AG04450 (cell line): ENCODE measurements at regions of chr1 and their contacts with region 1.

Region 1: GRCh38 chr1:209989525-209989924 is 51.5 kb downstream of the SYT14 start:
- DNase-seq: no peak
- H3K4me3 ChIP-seq: no peak overlapping the region
- H3K27ac ChIP-seq: no peak overlapping the region
- H3K27me3 ChIP-seq: no peaks in the 10 kb centered on the region
- CTCF ChIP-seq: peak; percentile 27; the same call in 1 of the 2 replicates

Region 2: DNA sequence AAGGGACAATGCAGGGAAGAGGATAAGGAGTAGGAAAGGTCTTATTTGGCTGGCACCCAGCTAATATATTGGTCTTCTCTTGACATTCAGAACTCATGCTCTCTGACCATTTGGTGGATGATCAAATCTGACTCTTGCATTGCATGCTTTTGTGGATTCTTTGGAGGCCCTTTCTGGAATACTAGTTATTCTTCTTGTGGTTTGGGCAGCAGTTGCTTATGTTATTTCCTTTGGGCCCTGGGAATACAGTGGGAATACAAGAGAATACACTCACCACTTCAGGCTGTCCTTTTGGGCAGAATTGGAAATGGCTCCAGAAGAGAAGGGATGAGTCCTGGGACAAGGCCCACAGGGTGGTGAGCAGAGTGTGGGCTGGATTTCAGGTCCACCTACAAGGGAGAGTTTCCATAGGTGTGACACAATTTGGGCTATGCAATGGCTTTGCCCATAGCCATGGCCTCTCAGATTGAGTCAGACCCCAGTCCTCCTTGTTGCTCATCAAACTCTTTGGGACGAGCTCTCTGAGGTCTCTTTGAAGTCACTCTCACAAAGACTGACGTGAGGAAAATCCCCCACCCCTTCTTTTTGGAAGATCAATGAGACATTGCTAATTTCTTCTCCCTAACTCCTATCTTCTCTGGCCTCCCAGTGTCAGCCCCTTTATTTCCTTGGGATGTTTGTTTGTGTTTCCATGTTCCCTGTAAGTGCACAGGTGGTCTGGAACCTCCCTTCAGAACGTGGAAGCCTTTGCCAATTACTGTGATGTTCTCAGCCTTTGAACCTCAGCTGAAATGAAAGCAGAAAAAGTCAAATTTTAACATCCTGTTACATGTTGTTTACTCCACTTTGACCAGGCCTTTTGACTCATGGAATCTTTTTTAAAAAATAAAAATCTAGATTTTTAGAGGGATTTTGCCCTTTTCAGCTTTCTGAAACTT is 265.5 kb before region 1 on chr1:
- CTCF ChIA-PET with region 1: no interaction called
- POLR2A ChIA-PET with region 1: no interaction called
- DNase-seq: no peak
- H3K4me3 ChIP-seq: no peak overlapping the region
- H3K27ac ChIP-seq: no peak overlapping the region
- H3K27me3 ChIP-seq: no peaks in the 10 kb centered on the region
- CTCF ChIP-seq: no peak

Region 3: DNA sequence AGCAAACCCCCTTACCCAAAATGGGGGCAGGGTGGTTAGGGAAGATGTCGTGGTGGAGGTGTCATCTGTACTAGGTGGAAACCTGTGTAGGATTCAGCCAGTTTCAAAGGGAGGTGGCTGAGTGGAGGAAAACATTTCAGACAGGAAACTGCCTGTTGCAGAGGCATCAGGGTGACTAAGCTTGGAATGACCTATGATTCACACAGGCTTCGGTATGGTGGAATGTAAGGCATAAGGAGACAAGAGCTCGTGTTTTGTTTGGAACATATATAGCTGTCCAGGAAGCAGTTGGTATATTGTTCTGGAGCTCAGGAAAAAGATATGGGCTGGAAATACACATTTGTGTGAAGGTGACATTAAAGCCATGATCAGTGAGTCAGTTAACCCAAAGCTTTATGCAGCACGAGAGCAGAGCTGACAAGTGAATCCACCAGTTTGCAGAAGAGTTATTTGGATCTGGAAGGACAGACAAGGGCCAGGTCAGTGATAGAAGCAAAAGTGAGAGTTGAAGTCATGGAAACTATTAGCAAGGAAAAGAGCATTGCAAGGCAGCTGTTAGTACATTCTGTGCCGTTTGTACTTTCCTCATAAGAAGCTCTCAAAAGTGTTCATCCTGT is 149.5 kb before region 1 on chr1:
- CTCF ChIA-PET with region 1: interaction called, 29 read pairs
- POLR2A ChIA-PET with region 1: no interaction called
- DNase-seq: peak; percentile 88
- H3K4me3 ChIP-seq: peak overlapping the region; percentile 22
- H3K27ac ChIP-seq: peak overlapping the region; percentile 96
- H3K27me3 ChIP-seq: no peaks in the 10 kb centered on the region
- CTCF ChIP-seq: no peak

Region 4: DNA sequence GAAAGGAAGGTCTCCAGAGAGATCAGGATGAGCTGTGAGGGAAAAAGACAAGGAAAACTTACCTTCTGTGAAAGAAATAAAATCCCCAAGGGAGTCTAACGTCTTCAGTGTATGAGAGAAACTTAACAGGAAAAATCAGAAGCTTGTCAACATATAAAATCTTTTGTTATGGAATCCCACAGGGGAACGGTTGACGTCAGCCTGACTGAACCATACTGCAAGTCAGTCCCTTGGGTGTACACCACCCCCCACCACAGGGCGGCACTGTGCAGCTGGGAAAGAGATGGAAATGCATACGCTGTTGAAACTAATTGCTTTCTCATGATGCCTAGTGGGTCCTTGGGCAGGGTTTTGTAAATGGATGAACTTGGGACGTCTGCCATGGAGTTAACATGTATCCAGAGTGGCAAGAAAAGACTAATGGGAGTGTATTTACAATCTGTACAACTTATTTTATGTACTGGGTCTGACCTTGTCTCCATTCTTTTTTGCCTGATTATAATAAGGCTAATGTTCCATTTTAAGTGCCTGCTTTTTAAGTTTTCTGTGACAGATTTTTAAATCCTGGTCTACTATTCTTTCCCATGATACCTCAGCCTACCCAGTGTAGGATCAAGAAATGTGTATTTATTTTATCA is 139.1 kb before region 1 on chr1:
- CTCF ChIA-PET with region 1: interaction called, 62 read pairs
- POLR2A ChIA-PET with region 1: no interaction called
- DNase-seq: no peak
- H3K4me3 ChIP-seq: no peak overlapping the region
- H3K27ac ChIP-seq: no peak overlapping the region
- H3K27me3 ChIP-seq: no peaks in the 10 kb centered on the region
- CTCF ChIP-seq: peak; percentile 86

Region 5: GRCh38 chr1:209875515-209875914 is 114.0 kb before region 1 on chr1:
- CTCF ChIA-PET with region 1: interaction called, 46 read pairs
- POLR2A ChIA-PET with region 1: no interaction called
- DNase-seq: no peak
- H3K4me3 ChIP-seq: no peak overlapping the region
- H3K27ac ChIP-seq: peak overlapping the region; percentile 41
- H3K27me3 ChIP-seq: no peaks in the 10 kb centered on the region
- CTCF ChIP-seq: peak; percentile 70

Region 6: DNA sequence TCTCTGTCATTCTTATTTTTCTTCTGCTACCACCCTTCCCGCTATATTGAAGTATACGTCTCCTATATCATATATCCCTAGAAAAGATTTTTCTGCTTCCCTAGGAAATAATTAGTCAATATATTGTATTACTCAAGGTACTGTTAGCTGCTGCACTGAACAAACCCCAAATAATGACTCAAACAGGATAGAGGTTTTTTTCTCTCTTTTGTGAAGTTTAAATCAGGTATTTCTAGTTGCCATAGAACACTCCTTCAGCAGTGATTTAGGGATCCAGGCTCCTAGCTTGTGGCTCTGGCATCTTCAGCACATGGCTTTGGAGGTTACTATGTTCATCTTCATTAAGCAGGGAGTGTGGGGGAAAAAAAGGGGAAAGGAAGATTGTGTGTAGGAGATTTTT is 33.4 kb before region 1 on chr1:
- CTCF ChIA-PET with region 1: no interaction called
- POLR2A ChIA-PET with region 1: no interaction called
- DNase-seq: no peak
- H3K4me3 ChIP-seq: no peak overlapping the region
- H3K27ac ChIP-seq: no peak overlapping the region
- H3K27me3 ChIP-seq: no peaks in the 10 kb centered on the region
- CTCF ChIP-seq: no peak